ENCODE measurements at regions of chr14 and their contacts with region 1.

Region 1: DNA sequence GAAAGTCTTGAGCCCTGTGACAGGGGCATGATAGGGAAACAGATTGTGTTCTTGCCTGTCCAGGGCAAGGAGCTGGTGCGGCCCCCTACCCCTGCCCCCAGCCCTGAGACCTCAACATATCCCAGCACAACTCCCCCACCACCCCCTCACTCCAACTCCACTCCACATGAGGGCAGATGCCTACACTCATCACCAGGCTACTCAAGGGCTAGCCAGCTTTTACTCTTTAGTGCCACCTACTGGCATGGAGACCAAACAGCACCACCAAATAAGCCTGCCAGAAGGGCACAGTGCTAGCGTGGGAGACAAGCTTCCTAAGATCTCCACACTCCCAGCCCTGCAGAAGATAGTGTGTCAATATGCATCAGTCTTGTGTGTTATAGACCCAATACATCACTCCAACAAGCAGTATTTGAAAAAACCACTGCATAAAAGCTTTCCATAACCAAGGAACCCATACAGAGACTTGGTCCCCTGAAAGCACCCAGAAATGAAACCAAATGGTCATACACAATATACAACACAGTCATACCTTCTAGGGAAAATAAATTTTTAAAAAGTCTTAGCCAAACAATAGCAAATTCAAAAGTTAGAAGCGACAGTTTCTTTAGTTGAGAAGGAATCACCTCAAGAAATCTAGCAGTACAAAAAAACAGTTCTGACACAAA is 154.4 kb downstream of the KCNK10 start:
- DNase-seq: peak; percentile 51 to 68 (median 61)
- H3K4me3 ChIP-seq: no peak overlapping the region
- H3K4me3 Mint-ChIP-seq: peak overlapping the region in 6 of 8 donors; percentile 10 to 66 (median 40)
- H3K27ac ChIP-seq: no peak overlapping the region
- H3K27ac Mint-ChIP-seq: peak overlapping the region in 2 of 7 donors; percentile 3 to 48
- H3K4me1 ChIP-seq: no peaks in the 10 kb centered on the region
- H3K4me1 Mint-ChIP-seq: peaks cover 0 to 18% (median 10%) of the 10 kb centered on the region in 4 donors
- H3K27me3 ChIP-seq: no peaks in the 10 kb centered on the region
- H3K27me3 Mint-ChIP-seq: peaks cover 2 to 7% of the 10 kb centered on the region in 2 donors

Region 2: GRCh38 chr14:87615822-87616679 is 552.6 kb before region 1 on chr14:
- CTCF ChIA-PET with region 1: no interaction called
- POLR2A ChIA-PET with region 1: no interaction called
- intact Hi-C with region 1: no loop called
- DNase-seq: no peak
- H3K4me3 ChIP-seq: no peak overlapping the region
- H3K4me3 Mint-ChIP-seq: no peak overlapping the region
- H3K27ac ChIP-seq: no peak overlapping the region
- H3K27ac Mint-ChIP-seq: no peak overlapping the region
- H3K4me1 ChIP-seq: no peaks in the 10 kb centered on the region
- H3K4me1 Mint-ChIP-seq: no peaks in the 10 kb centered on the region
- H3K27me3 ChIP-seq: no peaks in the 10 kb centered on the region
- H3K27me3 Mint-ChIP-seq: peaks cover 3% of the 10 kb centered on the region in 2 donors

Region 3: DNA sequence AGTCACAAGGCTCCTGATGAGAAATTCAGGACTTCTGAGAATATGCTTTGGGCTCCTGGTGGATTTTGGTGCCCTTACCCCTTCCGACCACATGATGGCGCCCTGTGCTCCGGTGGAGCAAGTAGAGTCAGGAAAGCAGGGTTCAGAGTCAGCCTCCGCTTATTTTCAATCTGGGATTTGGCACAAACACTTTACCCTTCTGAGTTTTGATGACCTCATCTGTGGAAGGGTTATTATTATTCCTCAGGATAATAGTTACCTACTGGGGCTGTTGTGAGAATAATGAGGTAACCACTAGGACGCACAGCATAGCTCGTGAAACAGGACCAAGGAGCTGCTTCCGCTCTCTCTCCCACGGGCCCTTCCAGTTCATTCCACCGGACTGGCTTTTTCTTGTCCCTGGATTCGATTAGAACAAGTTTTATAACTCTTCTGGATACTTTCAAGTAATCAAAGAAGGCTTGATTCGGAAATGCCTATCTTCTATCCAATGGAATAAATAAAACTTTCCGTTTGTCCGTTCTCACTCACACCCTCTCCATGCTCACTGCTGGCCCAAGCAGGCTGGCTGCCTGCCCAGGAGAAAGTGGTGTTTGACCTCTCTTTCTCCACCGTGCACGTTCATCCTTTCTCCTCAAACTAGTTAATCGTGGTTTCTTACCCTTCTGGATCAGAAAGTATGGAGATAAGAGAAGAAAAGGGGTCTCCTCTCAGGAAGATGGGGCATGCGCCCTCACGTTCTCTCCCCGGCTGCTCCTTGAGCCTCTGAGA is 280.2 kb before region 1 on chr14:
- CTCF ChIA-PET with region 1: no interaction called
- POLR2A ChIA-PET with region 1: no interaction called
- intact Hi-C with region 1: loop called (anchors 1 kb)
- DNase-seq: no peak
- H3K4me3 ChIP-seq: no peak overlapping the region
- H3K4me3 Mint-ChIP-seq: no peak overlapping the region
- H3K27ac ChIP-seq: no peak overlapping the region
- H3K27ac Mint-ChIP-seq: no peak overlapping the region
- H3K4me1 ChIP-seq: no peaks in the 10 kb centered on the region
- H3K4me1 Mint-ChIP-seq: no peaks in the 10 kb centered on the region
- H3K27me3 ChIP-seq: no peaks in the 10 kb centered on the region
- H3K27me3 Mint-ChIP-seq: peaks cover 3 to 8% of the 10 kb centered on the region in 2 donors

Region 4: DNA sequence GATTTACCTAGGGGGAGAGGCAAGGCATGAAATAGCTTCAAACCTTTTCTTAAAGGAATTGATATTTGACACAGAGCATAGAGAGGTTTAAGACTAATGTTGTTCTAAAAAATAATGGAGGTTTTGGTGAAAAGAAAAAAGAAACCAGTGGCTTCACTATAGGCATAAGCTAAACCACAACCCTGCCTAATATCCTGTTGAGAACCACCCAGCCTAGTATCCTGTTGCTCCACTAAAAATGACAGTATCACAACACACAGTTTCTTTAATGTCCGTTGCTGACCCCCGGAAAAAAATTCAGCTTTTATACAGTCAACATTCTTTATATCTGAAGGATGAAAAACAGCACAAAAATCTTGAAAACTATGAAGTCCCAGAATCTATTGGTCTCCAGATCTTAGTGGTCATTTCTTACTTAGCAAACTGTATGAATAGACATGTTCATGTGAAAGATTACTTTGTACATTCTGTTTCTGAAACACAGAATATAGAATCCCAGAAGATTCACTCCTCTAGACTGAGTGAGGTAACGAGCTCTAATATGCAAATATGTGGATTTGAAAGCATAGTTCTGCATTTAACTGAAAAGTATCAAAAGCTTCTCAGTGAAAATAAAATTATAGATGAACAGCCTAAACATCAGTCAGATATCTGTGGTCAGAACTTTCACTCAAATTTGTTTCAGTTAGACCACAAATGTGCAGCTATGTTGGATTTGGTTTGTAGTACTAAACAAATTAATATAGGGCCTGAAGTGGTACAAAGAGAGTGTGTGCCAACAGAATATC is 216.1 kb before region 1 on chr14:
- CTCF ChIA-PET with region 1: interaction called, 152 read pairs
- POLR2A ChIA-PET with region 1: interaction called, 6 read pairs
- intact Hi-C with region 1: no loop called
- DNase-seq: peak; percentile 13 to 58 (median 45)
- H3K4me3 ChIP-seq: no peak overlapping the region
- H3K4me3 Mint-ChIP-seq: peak overlapping the region; percentile 67 to 92 (median 86)
- H3K27ac ChIP-seq: peak overlapping the region; percentile 47
- H3K27ac Mint-ChIP-seq: peak overlapping the region; percentile 88 to 97 (median 93)
- H3K4me1 ChIP-seq: peaks cover 53% of the 10 kb centered on the region
- H3K4me1 Mint-ChIP-seq: peaks cover 41 to 69% (median 57%) of the 10 kb centered on the region in 4 donors
- H3K27me3 ChIP-seq: no peaks in the 10 kb centered on the region
- H3K27me3 Mint-ChIP-seq: no peaks in the 10 kb centered on the region

Region 5: DNA sequence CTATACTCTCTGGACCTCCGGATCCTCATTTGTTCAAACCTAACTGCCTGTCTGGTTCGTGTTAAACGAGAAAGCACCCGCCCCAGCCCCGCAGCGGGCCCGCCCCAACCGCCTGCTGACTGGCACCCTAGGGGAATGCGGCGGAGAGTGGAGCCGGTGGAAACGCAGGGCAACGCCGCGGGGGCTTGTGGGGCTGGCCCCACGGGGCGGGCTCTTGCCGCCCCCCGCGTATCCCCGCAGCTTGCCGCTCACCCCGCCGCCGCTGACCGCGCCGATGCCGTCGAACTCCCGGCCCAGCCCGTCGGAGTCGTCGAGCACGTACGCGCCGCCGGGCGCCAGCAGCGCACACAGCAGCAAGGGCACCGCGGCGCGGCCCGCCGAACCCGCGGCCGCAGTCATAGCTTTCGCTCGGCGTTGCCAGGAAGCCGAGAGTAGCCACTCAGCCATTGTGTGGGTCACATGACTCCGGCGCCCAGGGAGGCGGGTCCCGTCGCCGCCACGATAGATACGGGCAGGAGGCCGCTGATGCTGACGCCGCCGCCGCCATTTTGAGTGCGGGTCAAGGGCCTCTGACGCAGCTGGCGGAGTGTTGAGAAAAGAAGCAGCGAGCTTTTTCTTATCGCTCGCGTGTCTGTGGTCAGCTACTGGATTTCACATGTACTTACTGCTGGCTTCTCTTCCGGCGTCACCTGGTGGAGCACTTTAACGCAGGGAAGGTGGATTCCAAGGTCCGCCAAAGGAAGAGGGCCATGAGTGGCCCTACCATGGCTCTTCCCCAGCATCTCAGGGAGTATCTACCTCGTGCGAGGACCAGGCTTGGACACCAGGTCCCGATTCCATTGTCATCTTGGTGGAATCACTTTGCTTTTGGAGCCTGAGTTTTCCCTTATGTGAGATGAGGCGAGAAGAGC is 175.7 kb before region 1 on chr14 and contains the start of gene GALC:
- CTCF ChIA-PET with region 1: interaction called, 9 read pairs
- POLR2A ChIA-PET with region 1: interaction called, 10 read pairs
- intact Hi-C with region 1: loop called (anchors 1 kb)
- DNase-seq: peak; percentile 95 to 97 (median 95)
- H3K4me3 ChIP-seq: peak within 1 kb of the TSS; percentile 58 to 80
- H3K4me3 Mint-ChIP-seq: peak within 1 kb of the TSS; percentile 91 to 99 (median 97)
- H3K27ac ChIP-seq: peak within 1 kb of the TSS; percentile 93
- H3K27ac Mint-ChIP-seq: peak within 1 kb of the TSS; percentile 98 to 100 (median 99)
- H3K4me1 ChIP-seq: peaks cover 61% of the 10 kb centered on the region
- H3K4me1 Mint-ChIP-seq: peaks cover 48 to 78% (median 62%) of the 10 kb centered on the region in 4 donors
- H3K27me3 ChIP-seq: no peaks in the 10 kb centered on the region
- H3K27me3 Mint-ChIP-seq: no peaks in the 10 kb centered on the region
- total RNA-seq, gene GALC: 26.6 to 28.7 TPM

Region 6: GRCh38 chr14:88013750-88014349 is 154.8 kb before region 1 on chr14:
- CTCF ChIA-PET with region 1: interaction called, 58 read pairs
- POLR2A ChIA-PET with region 1: interaction called, 6 read pairs
- intact Hi-C with region 1: loop called (anchors 1 kb)
- DNase-seq: peak in 4 of 5 donors; percentile 29 to 46 (median 38)
- H3K4me3 ChIP-seq: no peak overlapping the region
- H3K4me3 Mint-ChIP-seq: peak overlapping the region in 6 of 8 donors; percentile 3 to 69 (median 44)
- H3K27ac ChIP-seq: no peak overlapping the region
- H3K27ac Mint-ChIP-seq: peak overlapping the region; percentile 9 to 91 (median 65)
- H3K4me1 ChIP-seq: peaks cover 59% of the 10 kb centered on the region
- H3K4me1 Mint-ChIP-seq: peaks cover 49 to 77% (median 64%) of the 10 kb centered on the region in 4 donors
- H3K27me3 ChIP-seq: no peaks in the 10 kb centered on the region
- H3K27me3 Mint-ChIP-seq: no peaks in the 10 kb centered on the region

Region 7: GRCh38 chr14:88181072-88181471 is 12.4 kb after region 1 on chr14:
- CTCF ChIA-PET with region 1: interaction called, 10 read pairs
- POLR2A ChIA-PET with region 1: interaction called, 3 read pairs
- intact Hi-C with region 1: no loop called
- DNase-seq: no peak
- H3K4me3 ChIP-seq: no peak overlapping the region
- H3K4me3 Mint-ChIP-seq: no peak overlapping the region
- H3K27ac ChIP-seq: no peak overlapping the region
- H3K27ac Mint-ChIP-seq: peak overlapping the region in 3 of 7 donors; percentile 37 to 55 (median 43)
- H3K4me1 ChIP-seq: no peaks in the 10 kb centered on the region
- H3K4me1 Mint-ChIP-seq: peaks cover 4 to 16% (median 5%) of the 10 kb centered on the region in 4 donors
- H3K27me3 ChIP-seq: no peaks in the 10 kb centered on the region
- H3K27me3 Mint-ChIP-seq: peaks cover 0 to 2% of the 10 kb centered on the region in 2 donors

Region 8: GRCh38 chr14:88189417-88190191 is 21.0 kb after region 1 on chr14:
- CTCF ChIA-PET with region 1: interaction called, 22 read pairs
- POLR2A ChIA-PET with region 1: no interaction called
- intact Hi-C with region 1: no loop called
- DNase-seq: peak in 4 of 5 donors; percentile 29 to 41 (median 36)
- H3K4me3 ChIP-seq: no peak overlapping the region
- H3K4me3 Mint-ChIP-seq: peak overlapping the region; percentile 47 to 84 (median 68)
- H3K27ac ChIP-seq: no peak overlapping the region
- H3K27ac Mint-ChIP-seq: peak overlapping the region in 1 of 7 donors; percentile 30
- H3K4me1 ChIP-seq: peaks cover 6% of the 10 kb centered on the region
- H3K4me1 Mint-ChIP-seq: peaks cover 3 to 8% (median 5%) of the 10 kb centered on the region in 4 donors
- H3K27me3 ChIP-seq: no peaks in the 10 kb centered on the region
- H3K27me3 Mint-ChIP-seq: peaks cover 15% of the 10 kb centered on the region in 2 donors

Measured in CD4-positive, alpha-beta memory T cell (primary cell).